T-cell (primary cell): ENCODE measurements at regions of chr9 and their contacts with region 1.

Region 1: DNA sequence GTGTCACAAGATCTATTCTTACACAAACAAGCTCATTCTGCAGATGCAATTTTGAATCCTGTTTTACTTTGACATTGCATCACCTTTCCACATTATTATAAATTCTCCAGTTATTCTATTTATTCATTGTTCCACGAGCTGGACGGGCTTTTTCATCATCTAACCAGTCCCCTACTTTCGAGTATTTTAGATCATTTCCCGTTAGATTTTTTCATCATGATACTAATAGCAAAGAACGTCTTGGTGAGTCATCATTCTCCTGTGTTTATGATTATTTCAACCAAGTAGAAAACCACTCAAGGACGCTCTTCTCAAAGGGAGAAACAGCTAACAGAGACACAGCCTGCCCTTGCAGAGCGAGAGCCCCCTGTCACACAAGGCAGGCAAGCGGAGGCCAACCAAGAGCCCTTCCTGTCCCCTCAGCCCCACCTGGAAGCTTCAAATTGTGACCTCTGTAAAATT is 15.1 kb downstream of the BBLN start:
- DNase-seq: no peak
- ATAC-seq: no peak
- H3K4me3 ChIP-seq: no peak overlapping the region
- H3K4me3 Mint-ChIP-seq: no peak overlapping the region
- H3K27ac ChIP-seq: no peak overlapping the region
- H3K27ac Mint-ChIP-seq: no peak overlapping the region
- H3K4me1 ChIP-seq: no peaks in the 10 kb centered on the region
- H3K4me1 Mint-ChIP-seq: no peaks in the 10 kb centered on the region
- H3K27me3 ChIP-seq: no peaks in the 10 kb centered on the region
- H3K27me3 Mint-ChIP-seq: no peaks in the 10 kb centered on the region

Region 2: GRCh38 chr9:128528445-128529160 is 353.5 kb after region 1 on chr9:
- CTCF ChIA-PET with region 1: no interaction called
- POLR2A ChIA-PET with region 1: interaction called in 1 of 2 experiments, 11 read pairs
- DNase-seq: no peak
- ATAC-seq: no peak
- H3K4me3 ChIP-seq: no peak overlapping the region
- H3K4me3 Mint-ChIP-seq: no peak overlapping the region
- H3K27ac ChIP-seq: no peak overlapping the region
- H3K27ac Mint-ChIP-seq: no peak overlapping the region
- H3K4me1 ChIP-seq: no peaks in the 10 kb centered on the region
- H3K4me1 Mint-ChIP-seq: no peaks in the 10 kb centered on the region
- H3K27me3 ChIP-seq: no peaks in the 10 kb centered on the region
- H3K27me3 Mint-ChIP-seq: no peaks in the 10 kb centered on the region